CD4-positive, alpha-beta memory T cell (primary cell): ENCODE measurements at regions of chr9 and their contacts with region 1.

Region 1: DNA sequence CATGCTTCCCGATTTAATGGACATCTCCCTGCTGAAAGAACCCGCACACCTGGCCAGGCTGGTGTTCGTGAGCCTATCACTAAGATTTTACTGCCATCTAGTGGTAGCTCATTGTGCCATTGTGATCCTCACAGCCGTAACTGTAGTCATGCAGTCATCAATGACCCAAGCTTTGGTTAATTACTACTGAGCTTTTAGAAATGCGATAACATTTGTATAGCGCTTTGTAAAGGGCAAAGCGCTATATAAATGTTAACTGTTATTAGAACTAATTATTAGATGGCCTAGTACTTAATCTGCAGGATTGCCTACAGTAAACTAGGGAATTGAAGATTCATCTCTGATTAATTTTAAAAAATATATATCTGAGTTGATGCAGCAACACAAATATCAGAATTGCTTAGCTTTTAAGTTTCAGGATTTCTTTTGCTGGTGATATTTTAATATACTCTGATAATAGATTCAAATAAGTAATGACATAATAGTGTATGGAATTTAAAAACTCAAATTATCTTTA is 90.2 kb downstream of the HACD4 start:
- DNase-seq: peak; percentile 56 to 67 (median 61)
- H3K4me3 ChIP-seq: no peak overlapping the region
- H3K4me3 Mint-ChIP-seq: no peak overlapping the region
- H3K27ac ChIP-seq: no peak overlapping the region
- H3K27ac Mint-ChIP-seq: peak overlapping the region in 1 of 7 donors; percentile 77
- H3K4me1 ChIP-seq: no peaks in the 10 kb centered on the region
- H3K4me1 Mint-ChIP-seq: peaks cover 0 to 5% (median 3%) of the 10 kb centered on the region in 4 donors
- H3K27me3 ChIP-seq: no peaks in the 10 kb centered on the region
- H3K27me3 Mint-ChIP-seq: no peaks in the 10 kb centered on the region

Region 2: DNA sequence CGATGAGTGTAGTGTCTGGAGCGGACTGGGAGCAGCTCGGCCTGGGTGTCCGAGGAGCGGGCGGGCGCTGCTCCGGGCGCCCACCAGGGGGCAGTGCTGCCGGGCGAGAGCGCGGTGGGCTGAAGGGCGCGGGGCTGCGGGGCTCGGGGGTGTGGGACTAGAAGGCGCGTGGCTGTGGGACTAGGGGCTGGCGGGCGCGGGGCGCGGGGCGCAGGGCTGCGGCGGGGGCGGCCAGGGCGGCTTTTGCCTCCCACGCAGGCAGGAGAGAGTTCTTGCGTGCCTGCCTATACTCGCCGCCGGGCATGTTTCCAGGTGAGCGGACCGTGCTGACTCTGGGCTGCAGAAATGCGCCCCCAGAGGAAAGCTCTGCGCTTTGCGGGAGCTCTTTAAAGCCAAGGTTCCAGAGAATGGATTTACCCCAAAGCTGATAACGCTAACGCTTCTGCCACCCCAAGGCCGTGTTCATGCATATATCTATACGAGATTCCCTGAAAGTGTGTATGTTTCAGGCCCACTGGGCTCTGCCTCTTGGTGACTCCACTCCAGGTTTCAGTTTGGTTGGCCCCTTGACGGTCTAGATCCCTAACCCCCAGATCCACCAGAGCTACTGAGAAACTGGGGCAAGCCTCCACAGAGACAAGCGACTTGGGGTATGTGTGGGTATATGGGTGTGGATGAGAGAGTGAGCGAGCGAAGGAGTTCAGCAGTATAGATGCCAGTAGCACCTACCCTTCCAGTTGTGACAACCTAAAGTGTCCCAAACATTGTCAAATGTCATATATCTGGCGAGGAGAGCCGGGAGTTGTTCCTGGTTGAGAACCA is 1476.3 kb before region 1 on chr9:
- CTCF ChIA-PET with region 1: interaction called, 7 read pairs
- POLR2A ChIA-PET with region 1: no interaction called
- intact Hi-C with region 1: loop called (anchors 2 kb)
- DNase-seq: peak; percentile 61 to 79 (median 74)
- H3K4me3 ChIP-seq: peak overlapping the region in 1 of 2 donors; percentile 35
- H3K4me3 Mint-ChIP-seq: peak overlapping the region; percentile 84 to 98 (median 88)
- H3K27ac ChIP-seq: no peak overlapping the region
- H3K27ac Mint-ChIP-seq: peak overlapping the region in 3 of 7 donors; percentile 46 to 89 (median 80)
- H3K4me1 ChIP-seq: peaks cover 9% of the 10 kb centered on the region
- H3K4me1 Mint-ChIP-seq: peaks cover 7 to 14% (median 11%) of the 10 kb centered on the region in 4 donors
- H3K27me3 ChIP-seq: no peaks in the 10 kb centered on the region
- H3K27me3 Mint-ChIP-seq: no peaks in the 10 kb centered on the region

Region 3: DNA sequence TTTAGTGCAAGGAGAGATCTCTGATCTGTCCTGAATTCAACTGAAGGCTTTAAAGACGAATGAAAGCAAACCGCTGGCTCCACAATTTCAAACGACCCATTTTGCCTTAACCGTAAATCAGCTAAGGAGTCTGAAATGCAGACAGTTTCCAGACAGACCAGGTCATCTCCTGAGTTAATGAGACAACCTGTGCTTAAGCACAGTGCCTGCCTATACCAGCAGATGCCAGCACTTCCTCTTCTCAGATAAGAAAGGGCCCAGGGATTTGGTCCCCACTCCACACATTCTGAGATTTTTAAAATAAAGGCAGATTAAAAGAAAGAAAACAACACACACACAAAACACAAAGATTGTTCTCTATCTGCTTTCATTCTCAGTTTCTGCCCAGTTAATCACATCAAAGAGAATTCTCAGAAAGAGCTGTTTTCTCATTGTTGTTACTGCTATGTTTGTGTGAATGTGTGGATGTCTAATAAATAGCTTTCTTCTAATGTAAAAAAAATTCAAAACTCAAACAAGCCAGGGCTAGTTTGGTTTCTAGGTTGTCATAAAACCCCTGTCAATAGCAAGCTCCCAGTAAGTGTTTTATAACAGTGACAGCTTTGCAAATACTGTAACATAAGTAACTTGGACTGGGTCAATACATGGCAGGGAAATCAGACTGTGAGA is 994.7 kb before region 1 on chr9:
- CTCF ChIA-PET with region 1: interaction called, 15 read pairs
- POLR2A ChIA-PET with region 1: no interaction called
- intact Hi-C with region 1: loop called (anchors 1 kb)
- DNase-seq: no peak
- H3K4me3 ChIP-seq: no peak overlapping the region
- H3K4me3 Mint-ChIP-seq: no peak overlapping the region
- H3K27ac ChIP-seq: no peak overlapping the region
- H3K27ac Mint-ChIP-seq: no peak overlapping the region
- H3K4me1 ChIP-seq: no peaks in the 10 kb centered on the region
- H3K4me1 Mint-ChIP-seq: no peaks in the 10 kb centered on the region
- H3K27me3 ChIP-seq: no peaks in the 10 kb centered on the region
- H3K27me3 Mint-ChIP-seq: peaks cover 4% of the 10 kb centered on the region in 2 donors

Region 4: DNA sequence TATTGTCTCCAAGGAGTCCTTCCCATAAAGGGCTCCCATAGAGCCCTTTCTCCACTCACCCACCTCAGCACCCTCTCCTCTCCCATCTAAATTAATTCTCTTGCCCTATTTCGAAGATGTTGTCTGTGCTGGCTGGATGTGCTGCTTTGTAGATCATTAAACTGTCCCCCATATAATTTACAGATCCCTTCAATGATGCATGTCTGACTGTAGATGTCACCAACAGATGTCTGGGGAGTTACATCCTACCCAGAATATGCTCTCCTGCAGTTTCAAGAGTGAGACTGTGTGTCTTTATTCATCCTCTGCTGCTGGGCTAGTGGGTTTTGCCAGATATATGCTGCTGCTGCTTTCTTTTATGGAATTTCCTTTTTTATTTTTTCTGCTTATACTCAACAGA is 670.1 kb before region 1 on chr9:
- CTCF ChIA-PET with region 1: no interaction called
- POLR2A ChIA-PET with region 1: no interaction called
- intact Hi-C with region 1: loop called (anchors 1 kb)
- DNase-seq: peak in 2 of 5 donors; percentile 2 to 5
- H3K4me3 ChIP-seq: no peak overlapping the region
- H3K4me3 Mint-ChIP-seq: no peak overlapping the region
- H3K27ac ChIP-seq: no peak overlapping the region
- H3K27ac Mint-ChIP-seq: no peak overlapping the region
- H3K4me1 ChIP-seq: no peaks in the 10 kb centered on the region
- H3K4me1 Mint-ChIP-seq: peaks cover 1 to 6% (median 4%) of the 10 kb centered on the region in 4 donors
- H3K27me3 ChIP-seq: no peaks in the 10 kb centered on the region
- H3K27me3 Mint-ChIP-seq: peaks cover 0 to 1% of the 10 kb centered on the region in 2 donors

Region 5: GRCh38 chr9:20441711-20442423 is 499.4 kb before region 1 on chr9:
- CTCF ChIA-PET with region 1: no interaction called
- POLR2A ChIA-PET with region 1: no interaction called
- intact Hi-C with region 1: no loop called
- DNase-seq: no peak
- H3K4me3 ChIP-seq: no peak overlapping the region
- H3K4me3 Mint-ChIP-seq: no peak overlapping the region
- H3K27ac ChIP-seq: no peak overlapping the region
- H3K27ac Mint-ChIP-seq: peak overlapping the region in 2 of 7 donors; percentile 33 to 65
- H3K4me1 ChIP-seq: peaks cover 9% of the 10 kb centered on the region
- H3K4me1 Mint-ChIP-seq: peaks cover 19 to 41% (median 33%) of the 10 kb centered on the region in 4 donors
- H3K27me3 ChIP-seq: no peaks in the 10 kb centered on the region
- H3K27me3 Mint-ChIP-seq: no peaks in the 10 kb centered on the region

Region 6: GRCh38 chr9:20884985-20885593 is 56.1 kb before region 1 on chr9:
- CTCF ChIA-PET with region 1: interaction called, 22 read pairs
- POLR2A ChIA-PET with region 1: no interaction called
- intact Hi-C with region 1: no loop called
- DNase-seq: peak; percentile 43 to 57 (median 50)
- H3K4me3 ChIP-seq: no peak overlapping the region
- H3K4me3 Mint-ChIP-seq: no peak overlapping the region
- H3K27ac ChIP-seq: no peak overlapping the region
- H3K27ac Mint-ChIP-seq: no peak overlapping the region
- H3K4me1 ChIP-seq: no peaks in the 10 kb centered on the region
- H3K4me1 Mint-ChIP-seq: no peaks in the 10 kb centered on the region
- H3K27me3 ChIP-seq: no peaks in the 10 kb centered on the region
- H3K27me3 Mint-ChIP-seq: no peaks in the 10 kb centered on the region

Region 7: DNA sequence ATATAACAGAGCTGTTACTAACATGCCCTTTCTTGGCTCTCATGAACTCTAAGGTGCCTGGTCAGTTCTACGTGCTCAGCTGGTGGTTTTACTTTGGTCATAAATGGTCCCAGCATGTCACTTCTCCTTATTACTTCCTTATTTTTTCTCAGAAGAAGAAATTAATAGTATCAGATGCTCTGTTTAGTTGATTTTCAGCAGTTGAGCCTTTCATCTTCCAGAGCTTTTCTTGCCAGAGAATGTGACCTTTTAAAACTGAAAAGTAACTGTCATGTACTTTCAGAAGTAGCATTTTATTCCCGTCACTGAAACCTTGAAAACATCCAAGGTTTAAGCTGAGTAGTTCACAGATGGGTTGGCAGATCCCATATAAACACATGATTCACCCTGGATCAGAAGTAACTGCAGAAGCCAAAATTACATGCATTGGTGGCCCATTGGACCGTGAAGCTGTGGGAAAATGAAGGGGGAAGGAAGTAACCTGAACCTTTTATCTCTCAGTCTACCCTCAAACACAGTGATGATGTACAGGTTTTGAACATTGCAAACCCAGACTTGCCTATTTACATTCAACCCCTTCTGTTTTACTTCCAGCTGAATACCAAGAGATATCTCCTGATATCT is 39.7 kb after region 1 on chr9:
- CTCF ChIA-PET with region 1: no interaction called
- POLR2A ChIA-PET with region 1: no interaction called
- intact Hi-C with region 1: no loop called
- DNase-seq: no peak
- H3K4me3 ChIP-seq: no peak overlapping the region
- H3K4me3 Mint-ChIP-seq: no peak overlapping the region
- H3K27ac ChIP-seq: no peak overlapping the region
- H3K27ac Mint-ChIP-seq: no peak overlapping the region
- H3K4me1 ChIP-seq: no peaks in the 10 kb centered on the region
- H3K4me1 Mint-ChIP-seq: no peaks in the 10 kb centered on the region
- H3K27me3 ChIP-seq: no peaks in the 10 kb centered on the region
- H3K27me3 Mint-ChIP-seq: no peaks in the 10 kb centered on the region

Region 8: GRCh38 chr9:21110708-21111576 is 169.7 kb after region 1 on chr9:
- CTCF ChIA-PET with region 1: interaction called, 42 read pairs
- POLR2A ChIA-PET with region 1: no interaction called
- intact Hi-C with region 1: loop called (anchors 1 kb)
- DNase-seq: peak; percentile 43 to 67 (median 64)
- H3K4me3 ChIP-seq: no peak overlapping the region
- H3K4me3 Mint-ChIP-seq: no peak overlapping the region
- H3K27ac ChIP-seq: no peak overlapping the region
- H3K27ac Mint-ChIP-seq: no peak overlapping the region
- H3K4me1 ChIP-seq: no peaks in the 10 kb centered on the region
- H3K4me1 Mint-ChIP-seq: no peaks in the 10 kb centered on the region
- H3K27me3 ChIP-seq: no peaks in the 10 kb centered on the region
- H3K27me3 Mint-ChIP-seq: peaks cover 2 to 3% of the 10 kb centered on the region in 2 donors